IMR-90 (cell line): ENCODE measurements at regions of chr9 and their contacts with region 1.

Region 1: GRCh38 chr9:129665389-129665775 is at the start of gene PRRX2:
- DNase-seq: peak; percentile 43
- ATAC-seq: peak; percentile 77
- H3K4me3 ChIP-seq: peak within 1 kb of the TSS; percentile 92
- H3K27ac ChIP-seq: peak within 1 kb of the TSS; percentile 75
- H3K4me1 ChIP-seq: peaks cover 22% of the 10 kb centered on the region
- H3K27me3 ChIP-seq: no peaks in the 10 kb centered on the region
- CTCF ChIP-seq: no peak
- POLR2A ChIP-seq: peak; percentile 52; the same call in 1 of the 2 replicates
- RAD21 ChIP-seq: no peak
- total RNA-seq, gene PRRX2: 12.7 and 13.1 TPM in 2 replicates

Region 2: GRCh38 chr9:129650680-129651235 is 14.6 kb before region 1 on chr9:
- CTCF ChIA-PET with region 1: no interaction called
- POLR2A ChIA-PET with region 1: no interaction called
- dilution Hi-C with region 1: no loop called
- in situ Hi-C with region 1: no loop called
- intact Hi-C with region 1: no loop called
- DNase-seq: no peak
- ATAC-seq: no peak
- H3K4me3 ChIP-seq: no peak overlapping the region
- H3K27ac ChIP-seq: no peak overlapping the region
- H3K4me1 ChIP-seq: peaks cover 15% of the 10 kb centered on the region; the same call in 1 of the 2 replicates
- H3K27me3 ChIP-seq: no peaks in the 10 kb centered on the region
- CTCF ChIP-seq: no peak
- POLR2A ChIP-seq: no peak
- RAD21 ChIP-seq: no peak

Region 3: GRCh38 chr9:129712634-129713401 is 47.4 kb after region 1 on chr9:
- CTCF ChIA-PET with region 1: no interaction called
- POLR2A ChIA-PET with region 1: interaction called, 4 read pairs
- dilution Hi-C with region 1: no loop called
- in situ Hi-C with region 1: no loop called
- intact Hi-C with region 1: loop called (anchors 5 kb)
- DNase-seq: peak; percentile 87
- ATAC-seq: peak; percentile 61
- H3K4me3 ChIP-seq: peak overlapping the region; percentile 3; the same call in 1 of the 2 replicates
- H3K27ac ChIP-seq: peak overlapping the region; percentile 81
- H3K4me1 ChIP-seq: peaks cover 52% of the 10 kb centered on the region
- H3K27me3 ChIP-seq: no peaks in the 10 kb centered on the region
- CTCF ChIP-seq: peak; percentile 21; the same call in 1 of the 2 replicates
- POLR2A ChIP-seq: no peak
- RAD21 ChIP-seq: no peak